HEK293T (cell line): ENCODE measurements at regions of chr7 and their contacts with region 1.

Region 1: GRCh38 chr7:151085691-151086620 is at the start of gene AGAP3:
- DNase-seq: peak; percentile 94

Region 2: DNA sequence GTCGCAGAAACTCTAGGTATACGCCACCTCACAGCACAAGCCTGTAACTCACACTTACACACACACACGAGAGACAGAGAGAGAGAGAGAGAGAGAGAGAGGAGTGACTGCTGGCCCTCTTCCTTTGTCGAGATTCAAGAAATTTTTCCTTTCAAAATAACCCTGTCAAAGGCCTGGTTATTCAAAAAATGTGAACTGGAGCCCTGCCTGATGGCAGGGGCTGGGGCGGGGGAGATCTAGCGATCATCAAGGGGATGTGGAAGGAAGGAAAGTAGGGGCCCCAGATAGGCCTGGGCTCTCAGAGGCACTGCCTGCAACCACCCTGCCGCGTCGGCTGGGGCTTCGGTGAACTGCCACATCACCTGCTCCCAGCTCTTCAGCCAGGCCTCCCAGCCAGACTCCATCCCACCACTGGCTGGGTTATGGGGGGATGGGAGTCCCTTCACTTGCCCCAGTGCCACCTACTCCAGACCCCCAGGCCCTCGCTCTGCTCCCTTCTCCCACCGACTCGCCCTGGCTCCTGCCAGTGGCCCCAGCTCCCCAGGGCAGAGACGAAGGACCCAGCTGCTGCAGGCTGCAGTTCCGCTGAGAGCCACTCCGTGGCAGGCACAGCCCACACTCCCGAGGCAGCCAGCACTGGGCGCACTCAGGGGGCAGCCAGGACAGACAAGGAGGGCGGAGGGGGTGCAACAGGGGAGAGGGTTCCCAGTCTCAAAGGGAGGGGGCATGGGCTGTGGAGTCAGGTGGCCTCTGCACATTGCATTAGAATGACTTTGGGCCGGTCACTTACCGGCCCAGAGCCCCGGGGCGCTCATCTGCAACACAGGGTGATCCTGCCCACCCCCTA is 123.2 kb before region 1 on chr7:
- CTCF ChIA-PET with region 1: no interaction called
- POLR2A ChIA-PET with region 1: no interaction called
- DNase-seq: peak; percentile 92

Region 3: DNA sequence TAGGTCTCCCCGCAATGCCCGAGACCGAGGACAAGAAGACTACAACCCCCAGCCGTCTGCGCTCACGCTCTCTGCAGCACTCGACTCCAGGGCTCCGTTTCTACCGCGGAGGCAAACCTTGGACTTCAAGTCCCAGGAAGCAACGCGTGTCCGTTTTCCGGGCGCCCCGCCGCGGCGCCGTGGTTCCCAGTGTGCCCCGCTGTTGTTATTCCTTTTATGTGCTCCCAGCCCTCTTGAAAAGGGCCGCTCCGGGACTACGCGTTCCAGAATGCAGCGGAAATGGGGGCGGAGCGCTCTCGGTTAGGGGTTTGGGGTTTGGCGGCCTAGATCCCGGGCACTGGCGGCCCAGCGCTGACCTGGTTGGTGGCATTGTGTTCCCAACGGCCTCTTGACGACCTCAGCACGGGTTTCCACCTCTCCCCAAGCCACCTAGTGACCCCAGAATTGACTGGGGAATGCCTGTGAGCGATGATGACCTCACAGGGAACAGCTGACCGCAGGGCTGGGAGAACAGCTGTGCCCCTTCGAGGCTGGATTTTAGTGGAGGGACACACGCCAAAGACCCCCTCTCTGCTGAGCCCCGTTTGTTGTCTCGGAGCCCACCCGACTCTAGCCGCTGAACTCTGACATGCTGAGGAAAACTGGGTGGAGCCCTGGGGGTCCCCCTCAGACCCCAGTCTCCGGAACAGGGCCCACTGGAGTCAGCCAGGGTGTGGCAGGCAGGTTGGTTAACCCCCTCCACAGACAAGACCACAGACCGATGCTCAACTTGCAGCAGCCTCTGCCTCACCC is 27.8 kb before region 1 on chr7:
- CTCF ChIA-PET with region 1: no interaction called
- POLR2A ChIA-PET with region 1: interaction called, 21 read pairs
- DNase-seq: peak; percentile 100

Region 4: DNA sequence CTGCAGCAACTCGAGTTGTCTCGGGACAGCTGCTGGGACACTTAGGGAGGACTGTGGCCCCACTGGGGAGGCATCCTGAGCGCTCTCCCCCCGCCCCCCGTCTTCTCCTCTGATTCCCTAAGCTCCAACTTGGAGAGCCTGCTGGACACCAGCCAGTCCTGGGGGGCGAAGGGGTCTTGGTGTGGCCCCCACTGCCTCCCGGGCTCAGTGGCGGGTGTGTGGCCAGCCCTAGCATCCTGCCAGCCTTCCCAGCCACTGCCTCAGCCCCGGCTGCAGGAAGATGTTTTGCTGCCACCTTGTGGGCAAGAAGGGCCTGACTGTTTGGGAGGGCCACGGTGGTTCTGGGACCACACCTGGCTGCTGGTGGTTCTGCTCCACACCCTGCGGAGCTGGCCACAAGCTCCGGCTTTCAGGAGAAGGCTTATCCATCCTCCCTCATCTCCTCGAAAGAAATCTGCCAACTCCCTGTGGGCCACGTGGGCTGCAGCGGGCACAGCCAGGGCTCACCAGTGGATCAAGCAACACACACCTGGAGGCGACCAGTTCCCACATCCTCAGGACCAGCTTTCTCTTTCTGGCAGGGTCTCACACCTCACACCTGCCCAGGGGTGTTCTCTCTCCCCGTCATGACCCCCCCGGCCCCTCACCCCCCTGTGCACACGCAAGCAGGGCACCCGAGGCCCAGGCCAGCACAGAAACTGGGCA is 25.1 kb after region 1 on chr7:
- CTCF ChIA-PET with region 1: interaction called, 13 read pairs
- POLR2A ChIA-PET with region 1: interaction called, 7 read pairs
- DNase-seq: peak; percentile 93